ENCODE measurements at regions of chr6 and their contacts with region 1.

Region 1: DNA sequence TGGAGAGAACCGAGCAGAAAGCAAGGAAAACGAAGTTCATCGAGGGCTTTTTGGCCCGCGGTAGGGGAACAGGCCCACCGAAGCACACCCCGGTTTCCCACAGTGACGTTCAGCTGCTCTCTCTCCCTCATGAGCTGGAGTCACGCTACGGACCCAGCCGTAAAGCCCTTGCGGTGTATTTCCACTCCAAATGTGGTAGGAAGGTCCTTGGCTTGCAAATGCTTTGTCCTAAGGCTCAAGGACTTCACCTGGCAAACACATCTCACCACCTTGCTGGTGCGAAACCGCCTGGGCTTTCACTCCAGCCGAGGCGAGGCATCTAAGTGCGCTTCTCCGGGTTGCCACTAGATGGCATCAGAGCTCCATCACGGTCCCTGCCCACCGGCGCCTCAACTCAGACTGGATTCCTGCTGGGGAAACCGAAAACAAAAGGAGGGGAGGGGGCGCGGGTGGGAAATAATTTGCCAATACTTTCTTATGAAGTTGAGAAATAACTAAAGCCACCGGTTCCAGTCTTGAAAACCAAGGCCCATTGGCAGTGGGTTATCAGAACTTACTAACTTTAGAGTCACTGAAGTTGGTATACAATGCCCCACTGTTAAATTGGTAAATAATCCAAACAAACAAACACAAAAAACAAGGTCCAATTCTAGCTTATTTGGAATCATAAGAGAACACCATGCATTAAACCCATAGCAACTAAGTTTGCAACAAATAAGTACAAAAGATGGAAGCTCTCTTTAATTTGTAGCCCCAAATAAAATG is 13.4 kb upstream of the FOXC1 start:
- H3K4me3 ChIP-seq: peak overlapping the region; percentile 5
- H3K27ac ChIP-seq: peak overlapping the region; percentile 90
- H3K4me1 ChIP-seq: peaks cover 31% of the 10 kb centered on the region
- CTCF ChIP-seq: peak; percentile 94

Region 2: GRCh38 chr6:1524040-1524480 is 72.2 kb before region 1 on chr6:
- CTCF ChIA-PET with region 1: interaction called, 16 read pairs
- POLR2A ChIA-PET with region 1: no interaction called
- H3K4me3 ChIP-seq: no peak overlapping the region
- H3K27ac ChIP-seq: no peak overlapping the region
- H3K4me1 ChIP-seq: peaks cover 6% of the 10 kb centered on the region; the same call in 1 of the 2 replicates
- CTCF ChIP-seq: no peak

Region 3: DNA sequence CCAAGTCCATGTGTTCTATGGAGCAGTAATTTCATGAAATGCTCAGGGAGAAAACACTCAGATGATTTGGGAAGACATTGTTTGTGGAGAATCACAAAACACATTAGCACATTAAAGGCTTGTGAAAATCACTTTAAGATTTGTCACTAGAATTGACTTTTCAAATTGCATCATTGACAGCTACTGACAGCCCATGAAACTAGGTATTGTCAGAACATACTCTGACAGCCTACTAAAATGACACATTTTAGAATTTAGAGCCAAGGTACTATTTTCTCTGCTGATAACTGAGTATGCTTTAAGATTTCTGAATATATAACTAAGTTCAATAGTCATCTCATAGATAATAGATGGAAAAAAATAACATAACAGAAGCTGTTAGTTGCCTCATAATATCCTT is 53.9 kb before region 1 on chr6:
- CTCF ChIA-PET with region 1: no interaction called
- POLR2A ChIA-PET with region 1: no interaction called
- H3K4me3 ChIP-seq: no peak overlapping the region
- H3K27ac ChIP-seq: no peak overlapping the region
- H3K4me1 ChIP-seq: no peaks in the 10 kb centered on the region
- CTCF ChIP-seq: no peak

Region 4: DNA sequence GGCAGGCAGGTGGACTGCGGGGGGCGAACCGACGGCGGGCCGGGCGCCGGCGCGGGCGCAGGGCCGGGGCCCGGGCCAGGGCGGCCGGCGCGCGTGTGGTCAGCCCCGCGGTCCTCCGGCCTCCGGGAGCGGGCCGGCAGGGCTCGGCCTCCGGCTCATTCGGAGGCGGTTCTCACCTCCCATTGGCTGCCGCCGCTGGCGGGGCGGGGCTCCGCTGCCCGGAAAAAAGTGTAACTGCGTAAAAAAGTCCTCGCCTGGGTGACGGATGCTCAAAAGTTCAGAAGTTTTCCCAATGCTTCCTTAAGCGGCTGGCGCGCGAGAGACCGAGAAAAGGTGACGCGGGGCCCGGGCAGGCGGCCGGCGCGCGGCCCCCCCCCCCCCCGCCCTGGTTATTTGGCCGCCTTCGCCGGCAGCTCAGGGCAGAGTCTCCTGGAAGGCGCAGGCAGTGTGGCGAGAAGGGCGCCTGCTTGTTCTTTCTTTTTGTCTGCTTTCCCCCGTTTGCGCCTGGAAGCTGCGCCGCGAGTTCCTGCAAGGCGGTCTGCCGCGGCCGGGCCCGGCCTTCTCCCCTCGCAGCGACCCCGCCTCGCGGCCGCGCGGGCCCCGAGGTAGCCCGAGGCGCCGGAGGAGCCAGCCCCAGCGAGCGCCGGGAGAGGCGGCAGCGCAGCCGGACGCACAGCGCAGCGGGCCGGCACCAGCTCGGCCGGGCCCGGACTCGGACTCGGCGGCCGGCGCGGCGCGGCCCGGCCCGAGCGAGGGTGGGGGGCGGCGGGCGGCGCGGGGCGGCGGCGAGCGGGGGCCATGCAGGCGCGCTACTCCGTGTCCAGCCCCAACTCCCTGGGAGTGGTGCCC is 13.6 kb after region 1 on chr6 and contains the start of gene FOXC1:
- CTCF ChIA-PET with region 1: interaction called, 23 read pairs
- POLR2A ChIA-PET with region 1: interaction called, 24 read pairs
- H3K4me3 ChIP-seq: peak within 1 kb of the TSS; percentile 59
- H3K27ac ChIP-seq: peak within 1 kb of the TSS; percentile 100
- H3K4me1 ChIP-seq: peaks cover 2% of the 10 kb centered on the region; the same call in 1 of the 2 replicates
- CTCF ChIP-seq: no peak

Region 5: GRCh38 chr6:2196079-2196679 is 599.9 kb after region 1 on chr6:
- CTCF ChIA-PET with region 1: interaction called, 10 read pairs
- POLR2A ChIA-PET with region 1: no interaction called
- H3K4me3 ChIP-seq: no peak overlapping the region
- H3K27ac ChIP-seq: no peak overlapping the region
- H3K4me1 ChIP-seq: no peaks in the 10 kb centered on the region
- CTCF ChIP-seq: no peak; the same call in 1 of the 2 replicates

Region 6: GRCh38 chr6:2353412-2354137 is 757.3 kb after region 1 on chr6:
- CTCF ChIA-PET with region 1: interaction called, 34 read pairs
- POLR2A ChIA-PET with region 1: interaction called, 3 read pairs
- H3K4me3 ChIP-seq: no peak overlapping the region
- H3K27ac ChIP-seq: peak overlapping the region; percentile 52; the same call in 1 of the 2 replicates
- H3K4me1 ChIP-seq: peaks cover 7% of the 10 kb centered on the region
- CTCF ChIP-seq: peak; percentile 48

Region 7: DNA sequence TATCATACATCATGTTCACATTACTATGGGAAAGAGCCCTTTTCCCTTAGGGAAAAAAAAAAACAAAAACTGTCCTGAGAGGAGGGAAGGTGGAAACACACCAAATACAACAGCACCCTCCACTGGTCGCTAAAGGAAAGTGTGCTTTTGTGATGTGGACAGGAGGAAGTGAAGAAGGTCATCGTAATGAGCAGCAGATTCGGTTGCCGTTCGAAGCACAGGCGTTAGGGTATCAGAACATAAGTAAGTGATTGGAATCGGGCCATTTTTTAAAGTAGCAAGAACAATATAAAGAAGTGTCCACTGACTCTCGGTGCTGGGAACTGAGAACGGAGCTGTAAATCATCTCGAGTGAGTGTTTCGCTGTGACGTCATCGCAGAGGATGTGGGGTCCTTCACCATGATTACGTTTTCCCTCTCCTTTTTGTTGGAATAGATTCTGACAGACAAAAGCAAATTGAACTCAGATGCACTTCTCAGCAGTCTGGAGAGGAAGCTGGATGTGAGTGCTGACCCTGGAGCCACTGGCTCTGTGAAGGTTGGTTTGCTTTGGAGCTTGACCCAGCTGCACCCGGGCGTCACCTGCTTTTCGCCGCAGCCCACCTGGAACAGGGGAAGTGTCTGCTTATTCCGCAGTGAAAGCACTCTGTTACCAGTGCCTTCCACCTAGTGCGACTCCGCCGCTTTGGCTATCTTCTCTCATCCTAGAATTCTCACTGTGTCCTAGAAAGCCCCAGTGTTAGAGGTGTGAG is 852.7 kb after region 1 on chr6:
- CTCF ChIA-PET with region 1: interaction called, 38 read pairs
- POLR2A ChIA-PET with region 1: no interaction called
- H3K4me3 ChIP-seq: peak overlapping the region; percentile 20
- H3K27ac ChIP-seq: no peak overlapping the region
- H3K4me1 ChIP-seq: peaks cover 13% of the 10 kb centered on the region
- CTCF ChIP-seq: peak; percentile 87